PC-9 (cell line): ENCODE measurements at regions of chr1 and their contacts with region 1.

Region 1: GRCh38 chr1:154891452-154891851 is 21.4 kb upstream of the KCNN3 start:
- DNase-seq: no peak
- H3K4me3 ChIP-seq: no peak overlapping the region
- H3K27ac ChIP-seq: no peak overlapping the region
- H3K4me1 ChIP-seq: no peaks in the 10 kb centered on the region
- H3K27me3 ChIP-seq: peaks cover 63% of the 10 kb centered on the region
- CTCF ChIP-seq: no peak

Region 2: DNA sequence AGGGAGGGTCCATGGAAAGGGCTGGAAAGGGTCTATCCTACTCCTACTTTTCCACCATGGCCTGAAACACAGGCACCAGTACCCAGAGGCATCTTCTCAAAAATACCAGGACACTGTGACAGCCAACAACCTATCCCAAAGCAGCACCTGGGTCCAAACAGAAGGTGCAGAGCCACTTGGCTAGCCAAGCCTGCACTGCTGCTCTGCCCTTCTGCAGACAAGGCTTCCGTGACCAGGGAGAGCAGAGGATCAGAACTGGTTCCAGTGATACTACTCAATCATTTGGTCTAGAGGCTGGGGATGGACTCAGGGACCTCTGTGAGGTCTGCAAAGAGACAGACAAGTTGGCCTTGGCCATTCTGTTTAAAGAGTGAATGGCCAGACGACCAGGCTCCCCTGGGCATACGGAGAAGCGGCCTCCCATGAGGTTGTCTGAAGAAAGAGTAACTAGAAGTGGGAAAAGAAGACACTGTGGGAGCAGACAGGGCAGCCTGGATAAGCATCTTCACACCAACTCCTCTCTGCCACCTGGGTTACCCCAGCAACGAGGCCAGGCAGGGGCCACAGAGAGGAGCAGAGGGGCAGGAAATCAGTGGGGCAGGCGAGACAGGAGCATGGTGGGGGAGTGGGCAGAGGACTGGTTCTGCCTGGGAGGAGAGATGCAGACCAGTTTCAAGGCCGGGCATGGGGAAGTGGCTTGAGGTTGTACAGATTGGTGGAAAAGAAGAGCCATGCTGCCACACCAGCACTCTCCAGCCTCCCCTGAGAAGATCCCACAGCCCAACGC is 27.1 kb before region 1 on chr1:
- CTCF ChIA-PET with region 1: interaction called, 14 read pairs
- POLR2A ChIA-PET with region 1: no interaction called
- intact Hi-C with region 1: no loop called
- DNase-seq: no peak
- H3K4me3 ChIP-seq: no peak overlapping the region
- H3K27ac ChIP-seq: no peak overlapping the region
- H3K4me1 ChIP-seq: no peaks in the 10 kb centered on the region
- H3K27me3 ChIP-seq: peaks cover 48% of the 10 kb centered on the region
- CTCF ChIP-seq: no peak

Region 3: GRCh38 chr1:154901591-154901990 is 10.1 kb after region 1 on chr1:
- CTCF ChIA-PET with region 1: no interaction called
- POLR2A ChIA-PET with region 1: no interaction called
- intact Hi-C with region 1: no loop called
- DNase-seq: no peak
- H3K4me3 ChIP-seq: no peak overlapping the region
- H3K27ac ChIP-seq: no peak overlapping the region
- H3K4me1 ChIP-seq: no peaks in the 10 kb centered on the region
- H3K27me3 ChIP-seq: 0 out of 2 replicates have a peak, but pooled peaks cover 12% of the 10 kb centered on the region
- CTCF ChIP-seq: no peak

Region 4: GRCh38 chr1:154955039-154955717 is 63.7 kb after region 1 on chr1:
- CTCF ChIA-PET with region 1: no interaction called
- POLR2A ChIA-PET with region 1: no interaction called
- intact Hi-C with region 1: no loop called
- DNase-seq: peak in 1 of 2 experiments; percentile 46
- H3K4me3 ChIP-seq: peak overlapping the region; percentile 75
- H3K27ac ChIP-seq: 0 out of 2 replicates have a peak overlapping the region, but pooled peaks have one; percentile 16
- H3K4me1 ChIP-seq: peaks cover 8% of the 10 kb centered on the region; the same call in 1 of the 2 replicates
- H3K27me3 ChIP-seq: no peaks in the 10 kb centered on the region
- CTCF ChIP-seq: no peak

Region 5: GRCh38 chr1:155273343-155274245 is 382.1 kb after region 1 on chr1 and contains the start of gene CLK2:
- CTCF ChIA-PET with region 1: no interaction called
- POLR2A ChIA-PET with region 1: no interaction called
- intact Hi-C with region 1: no loop called
- DNase-seq: peak; percentile 82 to 93
- H3K4me3 ChIP-seq: peak within 1 kb of the TSS; percentile 76
- H3K27ac ChIP-seq: peak within 1 kb of the TSS; percentile 62
- H3K4me1 ChIP-seq: peaks cover 16% of the 10 kb centered on the region
- H3K27me3 ChIP-seq: no peaks in the 10 kb centered on the region
- CTCF ChIP-seq: no peak
- total RNA-seq, gene CLK2: 39.1 and 43.9 TPM in 2 replicates